T-cell (primary cell): ENCODE measurements at regions of chr15 and their contacts with region 1.

Region 1: DNA sequence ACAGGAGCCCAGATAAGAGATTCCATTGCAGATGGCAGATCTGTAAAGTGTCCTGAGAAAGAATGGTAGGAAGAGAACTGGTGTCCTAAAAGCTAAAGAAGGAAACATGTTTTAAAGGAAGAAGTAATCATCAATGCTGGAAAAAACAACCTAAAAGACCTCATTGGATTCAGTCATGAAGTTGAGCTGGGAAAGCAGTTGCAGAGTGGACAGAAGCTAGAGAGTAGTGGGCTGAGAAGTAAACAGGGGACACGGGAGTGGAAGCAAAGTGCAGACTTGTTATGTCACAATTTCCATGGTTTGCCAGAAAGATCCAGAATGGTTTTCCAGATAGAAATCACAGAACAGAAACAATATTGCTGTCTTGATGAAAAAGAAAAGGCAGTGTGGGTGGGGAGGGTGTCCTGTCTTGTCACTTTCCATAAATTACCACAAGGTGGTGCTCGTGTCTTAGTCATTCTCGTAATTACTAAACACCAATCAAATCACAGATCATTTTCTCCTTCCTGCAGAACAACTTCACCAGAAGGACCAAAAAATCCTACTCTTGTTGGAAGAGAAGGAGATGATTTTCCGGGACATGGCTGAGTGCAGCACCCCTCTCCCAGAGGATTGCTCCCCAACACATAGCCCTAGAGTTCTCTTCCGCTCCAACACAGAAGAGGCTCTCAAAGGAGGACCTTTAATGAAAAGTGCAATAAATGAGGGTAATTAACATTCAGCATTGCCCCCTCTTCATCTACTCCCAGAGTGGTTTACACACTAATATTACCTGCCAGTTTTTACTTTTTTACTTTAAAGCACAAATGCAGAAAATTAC is 64.5 kb downstream of the KLHL25 start:
- DNase-seq: peak in 20 of 35 experiments; percentile 15 to 82 (median 38)
- ATAC-seq: peak; percentile 77 to 87 (median 84)
- H3K4me3 ChIP-seq: no peak overlapping the region
- H3K4me3 Mint-ChIP-seq: no peak overlapping the region
- H3K27ac ChIP-seq: peak overlapping the region; percentile 9
- H3K27ac Mint-ChIP-seq: peak overlapping the region; percentile 48 to 79
- H3K4me1 ChIP-seq: peaks cover 0 to 3% of the 10 kb centered on the region in 2 experiments
- H3K4me1 Mint-ChIP-seq: peaks cover 8 to 13% (median 13%) of the 10 kb centered on the region in 3 donors
- H3K27me3 ChIP-seq: no peaks in the 10 kb centered on the region
- H3K27me3 Mint-ChIP-seq: no peaks in the 10 kb centered on the region

Region 2: GRCh38 chr15:84894442-84895361 is 835.5 kb before region 1 on chr15:
- CTCF ChIA-PET with region 1: no interaction called
- POLR2A ChIA-PET with region 1: no interaction called
- DNase-seq: no peak
- ATAC-seq: no peak
- H3K4me3 ChIP-seq: no peak overlapping the region
- H3K4me3 Mint-ChIP-seq: no peak overlapping the region
- H3K27ac ChIP-seq: no peak overlapping the region
- H3K27ac Mint-ChIP-seq: no peak overlapping the region
- H3K4me1 ChIP-seq: no peaks in the 10 kb centered on the region
- H3K4me1 Mint-ChIP-seq: no peaks in the 10 kb centered on the region
- H3K27me3 ChIP-seq: peaks cover 0 to 28% of the 10 kb centered on the region in 2 experiments
- H3K27me3 Mint-ChIP-seq: peaks cover 12 to 13% of the 10 kb centered on the region in 2 donors

Region 3: DNA sequence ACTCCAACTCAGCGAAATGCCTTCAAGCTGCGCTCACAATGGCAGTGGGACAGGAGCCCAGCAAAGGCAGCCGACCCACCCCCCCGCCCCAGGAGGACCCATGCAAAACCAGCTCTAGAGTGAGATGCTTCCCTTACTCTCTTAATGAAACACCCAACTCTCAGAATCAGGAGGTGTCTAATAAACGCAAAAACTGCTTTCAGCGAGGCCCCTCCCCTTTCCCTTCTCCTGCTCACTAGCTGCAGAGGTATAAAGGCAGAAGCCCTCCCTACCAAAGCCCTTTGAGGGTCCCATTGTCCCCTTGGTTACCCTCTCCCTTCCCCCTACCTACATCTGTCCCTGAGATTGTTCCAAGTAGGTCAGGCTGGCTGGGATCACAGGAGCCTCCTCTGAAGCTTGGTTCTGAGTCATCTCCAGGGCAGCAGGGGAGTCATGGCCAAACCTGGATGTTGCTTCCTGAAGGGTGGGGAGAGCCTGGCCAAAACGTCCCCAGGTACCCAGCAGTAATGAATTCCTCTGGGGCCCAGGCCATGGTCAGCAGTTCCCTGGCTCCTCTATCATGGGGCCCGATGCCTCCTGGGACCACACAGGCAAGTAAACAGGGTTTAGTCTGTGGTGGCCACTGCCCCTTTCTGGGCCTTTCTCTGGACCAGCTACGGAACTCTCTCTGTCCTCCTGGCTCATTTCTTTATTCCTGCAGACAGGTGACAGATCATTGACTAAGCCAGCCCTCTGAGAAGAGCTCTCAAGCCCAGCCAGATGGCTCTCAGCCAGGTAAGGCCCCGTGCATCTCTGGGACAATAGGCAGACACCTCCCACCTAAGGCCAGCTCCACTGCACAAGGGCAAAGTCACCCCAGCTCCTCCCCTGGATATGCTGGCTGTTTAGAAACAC is 55.9 kb after region 1 on chr15:
- CTCF ChIA-PET with region 1: interaction called in 1 of 2 experiments, 3 read pairs
- POLR2A ChIA-PET with region 1: interaction called in 1 of 2 experiments, 20 read pairs
- DNase-seq: no peak
- ATAC-seq: peak in 3 of 4 experiments; percentile 29 to 46 (median 39)
- H3K4me3 ChIP-seq: peak overlapping the region; percentile 28 to 58
- H3K4me3 Mint-ChIP-seq: peak overlapping the region; percentile 54 to 81 (median 74)
- H3K27ac ChIP-seq: peak overlapping the region; percentile 52
- H3K27ac Mint-ChIP-seq: peak overlapping the region; percentile 91
- H3K4me1 ChIP-seq: peaks cover 20 to 40% of the 10 kb centered on the region in 2 experiments
- H3K4me1 Mint-ChIP-seq: peaks cover 62 to 65% (median 65%) of the 10 kb centered on the region in 3 donors
- H3K27me3 ChIP-seq: no peaks in the 10 kb centered on the region
- H3K27me3 Mint-ChIP-seq: no peaks in the 10 kb centered on the region

Region 4: DNA sequence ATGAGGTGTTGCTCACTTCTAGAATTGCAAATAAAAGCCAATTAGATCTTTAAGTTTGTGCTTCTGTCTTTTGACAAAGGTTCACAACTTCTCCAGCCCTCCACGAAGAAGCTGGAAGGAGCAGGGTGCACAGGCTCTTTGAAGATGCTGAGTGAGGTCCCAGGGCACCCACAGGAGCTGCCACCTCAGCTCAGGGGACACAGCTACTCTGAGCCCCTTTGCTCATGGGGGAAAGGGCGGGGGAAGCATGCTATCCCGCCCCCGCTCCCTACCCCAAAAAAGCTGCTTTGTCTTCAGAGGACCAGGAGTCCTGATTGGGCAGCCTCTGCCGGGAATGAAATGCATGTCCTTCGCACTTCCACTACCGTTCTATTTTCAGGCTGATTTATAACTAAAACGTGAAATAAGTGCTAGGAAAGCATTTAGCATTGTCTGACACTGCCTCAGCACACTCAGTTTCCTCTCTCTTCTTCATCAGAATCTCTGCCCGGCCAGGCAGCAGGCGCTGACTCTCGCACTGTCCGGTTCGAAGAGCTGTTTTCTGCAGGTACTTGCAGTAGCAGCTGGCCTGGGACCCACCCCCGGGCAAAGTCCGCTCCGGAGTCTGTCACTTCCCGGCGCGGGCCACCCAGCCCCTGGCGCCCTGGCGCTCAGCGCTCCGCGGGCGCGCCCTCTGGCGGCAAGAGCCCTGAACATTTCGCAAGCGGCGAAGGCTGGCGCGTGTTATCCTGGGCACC is 110.0 kb after region 1 on chr15:
- CTCF ChIA-PET with region 1: interaction called, 7 to 10 read pairs
- POLR2A ChIA-PET with region 1: no interaction called
- DNase-seq: peak; percentile 19 to 86 (median 68)
- ATAC-seq: peak; percentile 95 to 98 (median 96)
- H3K4me3 ChIP-seq: peak overlapping the region; percentile 31 to 46
- H3K4me3 Mint-ChIP-seq: peak overlapping the region; percentile 52 to 62 (median 62)
- H3K27ac ChIP-seq: no peak overlapping the region
- H3K27ac Mint-ChIP-seq: no peak overlapping the region
- H3K4me1 ChIP-seq: peaks cover 0 to 9% of the 10 kb centered on the region in 2 experiments
- H3K4me1 Mint-ChIP-seq: peaks cover 6 to 8% (median 6%) of the 10 kb centered on the region in 3 donors
- H3K27me3 ChIP-seq: peaks cover 0 to 14% of the 10 kb centered on the region in 2 experiments
- H3K27me3 Mint-ChIP-seq: peaks cover 5% of the 10 kb centered on the region in 2 donors